ENCODE measurements at regions of chr12 and their contacts with region 1.

Region 1: GRCh38 chr12:98653866-98654493 is 8.9 kb downstream of the APAF1 start:
- DNase-seq: no peak
- H3K4me3 ChIP-seq: no peak overlapping the region
- CTCF ChIP-seq: peak; percentile 42

Region 2: GRCh38 chr12:98418357-98419075 is 235.5 kb before region 1 on chr12:
- CTCF ChIA-PET with region 1: interaction called, 32 read pairs
- POLR2A ChIA-PET with region 1: no interaction called
- DNase-seq: peak; percentile 99
- H3K4me3 ChIP-seq: peak overlapping the region; percentile 45
- CTCF ChIP-seq: no peak

Measured in AG04449 (cell line).